Caco-2 (cell line): ENCODE measurements at regions of chr2 and their contacts with region 1.

Region 1: GRCh38 chr2:69724540-69725159 is 17.3 kb upstream of the ANXA4 start:
- DNase-seq: peak; percentile 85 to 92
- H3K4me3 ChIP-seq: peak overlapping the region; percentile 20
- H3K4me3 Mint-ChIP-seq: peak overlapping the region; percentile 66
- H3K27ac Mint-ChIP-seq: no peak overlapping the region
- H3K4me1 ChIP-seq: peaks cover 5% of the 10 kb centered on the region
- H3K4me1 Mint-ChIP-seq: peaks cover 12% of the 10 kb centered on the region
- H3K27me3 ChIP-seq: no peaks in the 10 kb centered on the region
- H3K27me3 Mint-ChIP-seq: no peaks in the 10 kb centered on the region
- CTCF ChIP-seq: peak; percentile 83 to 95

Region 2: GRCh38 chr2:69685321-69686048 is 39.2 kb before region 1 on chr2:
- CTCF ChIA-PET with region 1: interaction called, 10 read pairs
- POLR2A ChIA-PET with region 1: no interaction called
- intact Hi-C with region 1: no loop called
- DNase-seq: peak in 1 of 2 experiments; percentile 41
- H3K4me3 ChIP-seq: no peak overlapping the region
- H3K4me3 Mint-ChIP-seq: no peak overlapping the region
- H3K27ac Mint-ChIP-seq: peak overlapping the region; percentile 0
- H3K4me1 ChIP-seq: peaks cover 37% of the 10 kb centered on the region
- H3K4me1 Mint-ChIP-seq: peaks cover 36% of the 10 kb centered on the region
- H3K27me3 ChIP-seq: no peaks in the 10 kb centered on the region
- H3K27me3 Mint-ChIP-seq: no peaks in the 10 kb centered on the region
- CTCF ChIP-seq: no peak

Region 3: DNA sequence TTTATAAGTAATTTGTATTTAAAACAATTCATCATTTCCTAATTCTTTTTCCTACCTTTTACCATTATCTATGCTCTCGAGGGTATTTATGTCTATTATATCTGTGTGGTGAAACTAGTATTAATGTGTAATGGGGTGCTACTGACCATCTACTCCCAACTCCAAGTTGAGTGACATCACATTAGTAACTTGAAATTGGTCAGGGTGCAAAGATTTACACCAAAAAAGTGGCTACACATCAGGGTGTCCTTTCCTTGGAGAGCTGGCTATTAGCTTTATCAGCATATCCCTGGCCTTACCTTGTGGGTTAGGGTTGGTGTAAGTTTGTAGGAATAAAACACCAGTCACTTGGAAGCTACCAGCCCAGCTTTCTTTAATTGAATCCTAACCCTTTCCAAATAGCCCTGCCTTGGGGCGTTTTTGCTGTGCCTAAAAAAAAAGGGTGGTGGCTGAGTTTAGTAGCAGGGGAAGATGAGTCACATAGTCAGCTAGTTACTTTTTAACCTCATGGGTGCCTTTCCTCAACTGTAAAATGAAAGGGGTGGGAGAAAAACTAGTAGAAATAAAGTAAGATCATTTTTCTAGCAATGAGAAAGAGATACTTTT is 31.3 kb after region 1 on chr2:
- CTCF ChIA-PET with region 1: interaction called, 13 read pairs
- POLR2A ChIA-PET with region 1: no interaction called
- intact Hi-C with region 1: no loop called
- DNase-seq: peak; percentile 56 to 65
- H3K4me3 ChIP-seq: no peak overlapping the region
- H3K4me3 Mint-ChIP-seq: no peak overlapping the region
- H3K27ac Mint-ChIP-seq: peak overlapping the region; percentile 4
- H3K4me1 ChIP-seq: peaks cover 20% of the 10 kb centered on the region
- H3K4me1 Mint-ChIP-seq: peaks cover 16% of the 10 kb centered on the region
- H3K27me3 ChIP-seq: no peaks in the 10 kb centered on the region
- H3K27me3 Mint-ChIP-seq: no peaks in the 10 kb centered on the region
- CTCF ChIP-seq: no peak

Region 4: GRCh38 chr2:69798909-69799526 is 74.4 kb after region 1 on chr2:
- CTCF ChIA-PET with region 1: interaction called, 12 read pairs
- POLR2A ChIA-PET with region 1: no interaction called
- intact Hi-C with region 1: loop called (anchors 5 kb)
- DNase-seq: peak; percentile 63 to 71
- H3K4me3 ChIP-seq: peak overlapping the region; percentile 33
- H3K4me3 Mint-ChIP-seq: peak overlapping the region; percentile 71
- H3K27ac Mint-ChIP-seq: peak overlapping the region; percentile 92
- H3K4me1 ChIP-seq: peaks cover 49% of the 10 kb centered on the region
- H3K4me1 Mint-ChIP-seq: peaks cover 60% of the 10 kb centered on the region
- H3K27me3 ChIP-seq: no peaks in the 10 kb centered on the region
- H3K27me3 Mint-ChIP-seq: no peaks in the 10 kb centered on the region
- CTCF ChIP-seq: no peak

Region 5: GRCh38 chr2:69829256-69830046 is 104.8 kb after region 1 on chr2 and contains the start of gene GMCL1:
- CTCF ChIA-PET with region 1: interaction called, 17 read pairs
- POLR2A ChIA-PET with region 1: no interaction called
- intact Hi-C with region 1: no loop called
- DNase-seq: peak; percentile 96 to 99
- H3K4me3 ChIP-seq: peak within 1 kb of the TSS; percentile 91
- H3K4me3 Mint-ChIP-seq: peak within 1 kb of the TSS; percentile 87
- H3K27ac Mint-ChIP-seq: peak within 1 kb of the TSS; percentile 94
- H3K4me1 ChIP-seq: peaks cover 5% of the 10 kb centered on the region; the same call in 1 of the 2 replicates
- H3K4me1 Mint-ChIP-seq: peaks cover 7% of the 10 kb centered on the region
- H3K27me3 ChIP-seq: no peaks in the 10 kb centered on the region
- H3K27me3 Mint-ChIP-seq: no peaks in the 10 kb centered on the region
- CTCF ChIP-seq: no peak
- total RNA-seq, gene GMCL1: 13.8 and 17.5 TPM in 2 replicates

Region 6: GRCh38 chr2:70283500-70284191 is 559.0 kb after region 1 on chr2:
- CTCF ChIA-PET with region 1: no interaction called
- POLR2A ChIA-PET with region 1: no interaction called
- intact Hi-C with region 1: no loop called
- DNase-seq: no peak
- H3K4me3 ChIP-seq: no peak overlapping the region
- H3K4me3 Mint-ChIP-seq: no peak overlapping the region
- H3K27ac Mint-ChIP-seq: no peak overlapping the region
- H3K4me1 ChIP-seq: no peaks in the 10 kb centered on the region
- H3K4me1 Mint-ChIP-seq: peaks cover 13% of the 10 kb centered on the region
- H3K27me3 ChIP-seq: no peaks in the 10 kb centered on the region
- H3K27me3 Mint-ChIP-seq: no peaks in the 10 kb centered on the region
- CTCF ChIP-seq: no peak